Left cardiac atrium (tissue), 4 donors: ENCODE measurements at regions of chr11 and their contacts with region 1.

Region 1: DNA sequence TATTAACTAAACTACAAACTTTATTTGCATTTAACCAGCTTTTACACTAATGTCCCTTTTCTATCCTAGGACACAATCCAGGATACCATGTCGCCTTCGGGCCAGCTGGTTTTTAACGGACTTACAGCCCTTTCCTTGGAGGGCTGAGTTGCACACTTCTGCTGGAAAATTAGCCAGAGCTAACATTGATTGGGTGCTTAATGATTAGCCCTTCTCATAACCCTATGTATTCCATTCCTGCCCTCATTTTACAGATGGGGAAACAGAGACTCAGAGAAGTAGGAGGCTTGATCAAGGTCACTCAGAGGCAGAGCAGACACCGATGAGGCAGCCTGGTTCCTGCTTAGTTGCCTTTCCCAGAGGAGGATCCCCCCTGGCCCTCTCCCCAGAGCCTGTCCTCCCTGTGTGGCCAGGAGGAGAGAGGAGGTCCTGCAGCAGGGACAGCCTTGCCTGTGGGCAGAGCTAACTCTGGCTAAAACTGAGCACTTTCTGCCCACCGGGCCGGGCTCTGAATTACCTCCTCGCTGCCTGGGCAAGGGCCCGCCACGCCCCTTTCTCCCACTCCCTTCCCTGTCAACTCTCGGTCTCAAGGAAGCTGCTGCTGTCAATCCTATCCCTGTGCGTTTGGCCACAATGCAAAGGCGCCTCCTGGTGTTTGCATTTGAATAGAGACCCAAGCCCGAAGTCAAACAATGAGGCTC is 59.6 kb upstream of the PAX6 start:
- DNase-seq: peak; percentile 31
- ATAC-seq: peak; percentile 67 to 77

Region 2: DNA sequence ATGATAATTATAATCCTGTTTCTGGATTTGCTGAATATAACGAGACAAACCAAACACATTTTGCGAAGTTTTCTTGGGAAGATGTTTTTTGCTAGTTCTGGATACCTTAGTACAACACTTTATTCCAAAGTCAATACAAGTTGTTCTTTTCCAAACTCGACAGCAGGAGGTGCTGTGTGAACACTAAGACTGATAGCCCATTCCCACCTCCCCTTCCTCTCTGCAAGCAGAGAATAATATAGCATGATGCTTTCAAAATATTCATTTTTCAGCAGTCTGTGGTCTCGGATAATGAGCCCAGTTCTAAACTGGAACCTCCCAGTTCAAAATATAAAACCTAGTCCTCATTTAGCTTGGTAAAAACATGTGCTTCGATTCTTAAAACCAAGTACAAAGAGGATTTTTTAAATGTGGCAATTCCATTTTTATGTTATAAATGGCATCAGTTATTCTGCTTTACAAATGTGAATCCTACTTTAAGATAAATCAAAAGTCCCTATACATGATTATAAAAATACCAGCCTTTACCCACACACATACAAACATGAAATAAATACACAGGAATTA is 630.3 kb before region 1 on chr11:
- intact Hi-C with region 1: loop called in 1 of 2 experiments (anchors 5 kb)
- DNase-seq: no peak
- ATAC-seq: peak in 1 of 2 donors; percentile 32

Region 3: GRCh38 chr11:31397239-31397834 is 473.4 kb before region 1 on chr11:
- intact Hi-C with region 1: loop called (anchors 2 to 10 kb)
- DNase-seq: no peak
- ATAC-seq: no peak

Region 4: DNA sequence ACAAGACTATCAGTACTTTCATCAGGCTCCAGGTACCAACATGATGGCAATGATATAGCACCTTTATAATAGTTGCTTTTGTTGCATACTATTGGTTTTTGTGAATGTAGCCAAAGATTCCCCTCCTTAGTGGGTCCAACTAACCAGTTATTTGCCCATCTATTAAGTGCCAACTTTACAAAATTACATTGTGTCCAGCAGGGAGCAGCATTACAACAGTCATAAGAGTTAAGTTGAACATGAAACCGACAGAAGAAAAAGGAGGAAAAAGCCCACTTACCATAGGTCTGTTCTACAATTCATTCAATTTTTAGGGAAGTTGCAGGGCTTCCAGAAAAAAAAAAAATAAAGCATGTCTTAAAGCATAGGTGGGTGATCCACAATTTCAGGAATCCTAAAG is 382.9 kb before region 1 on chr11:
- intact Hi-C with region 1: loop called in 1 of 2 experiments (anchors 10 kb)
- DNase-seq: no peak
- ATAC-seq: no peak

Region 5: GRCh38 chr11:31641477-31642062 is 229.2 kb before region 1 on chr11:
- intact Hi-C with region 1: loop called in 1 of 2 experiments (anchors 2 kb)
- DNase-seq: no peak
- ATAC-seq: no peak

Region 6: GRCh38 chr11:31812383-31813381 is 58.1 kb before region 1 on chr11:
- intact Hi-C with region 1: no loop called
- DNase-seq: no peak
- ATAC-seq: peak in 1 of 2 donors; percentile 25

Region 7: GRCh38 chr11:32148881-32149389 is 278.2 kb after region 1 on chr11:
- intact Hi-C with region 1: no loop called
- DNase-seq: no peak
- ATAC-seq: no peak